ENCODE measurements at regions of chr4 and their contacts with region 1.

Region 1: GRCh38 chr4:25986807-25987206 is 72.8 kb downstream of the SMIM20 start:
- DNase-seq: no peak
- H3K4me3 ChIP-seq: no peak overlapping the region
- H3K27ac ChIP-seq: no peak overlapping the region
- H3K4me1 ChIP-seq: peaks cover 0 to 9% (median 4%) of the 10 kb centered on the region in 4 donors
- H3K27me3 ChIP-seq: no peaks in the 10 kb centered on the region
- CTCF ChIP-seq: no peak
- EP300 ChIP-seq: no peak
- POLR2A ChIP-seq: no peak

Region 2: DNA sequence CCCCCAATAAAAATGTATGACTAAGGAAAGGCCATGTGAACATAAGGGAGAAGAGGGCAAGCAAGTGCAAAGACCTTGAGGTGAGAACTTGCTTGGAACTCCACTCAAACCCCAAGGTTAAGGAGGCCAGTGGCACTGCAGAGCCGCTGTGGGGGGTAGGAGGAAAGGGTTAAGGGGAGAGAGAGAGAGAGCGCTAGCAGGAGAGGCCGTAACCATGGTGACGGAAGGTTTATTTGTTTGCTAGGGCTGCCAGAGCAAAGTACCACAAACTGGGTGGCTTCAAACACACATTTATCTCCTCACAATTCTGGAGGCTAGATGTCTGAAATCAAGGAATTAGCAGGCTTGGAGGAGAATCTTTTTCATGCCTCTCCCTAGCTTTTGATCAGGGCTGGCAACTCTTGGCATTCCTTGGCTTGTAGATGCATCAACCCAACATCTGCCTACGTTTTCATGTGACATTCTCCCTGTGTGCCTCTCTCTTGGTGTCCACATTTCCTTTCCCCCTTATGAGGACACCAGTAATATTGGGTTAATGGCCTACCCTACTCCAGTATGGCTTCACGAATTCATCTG is 37.5 kb before region 1 on chr4:
- intact Hi-C with region 1: no loop called
- DNase-seq: no peak
- H3K4me3 ChIP-seq: no peak overlapping the region
- H3K27ac ChIP-seq: no peak overlapping the region
- H3K4me1 ChIP-seq: no peaks in the 10 kb centered on the region
- H3K27me3 ChIP-seq: no peaks in the 10 kb centered on the region
- CTCF ChIP-seq: no peak
- EP300 ChIP-seq: no peak
- POLR2A ChIP-seq: no peak

Region 3: DNA sequence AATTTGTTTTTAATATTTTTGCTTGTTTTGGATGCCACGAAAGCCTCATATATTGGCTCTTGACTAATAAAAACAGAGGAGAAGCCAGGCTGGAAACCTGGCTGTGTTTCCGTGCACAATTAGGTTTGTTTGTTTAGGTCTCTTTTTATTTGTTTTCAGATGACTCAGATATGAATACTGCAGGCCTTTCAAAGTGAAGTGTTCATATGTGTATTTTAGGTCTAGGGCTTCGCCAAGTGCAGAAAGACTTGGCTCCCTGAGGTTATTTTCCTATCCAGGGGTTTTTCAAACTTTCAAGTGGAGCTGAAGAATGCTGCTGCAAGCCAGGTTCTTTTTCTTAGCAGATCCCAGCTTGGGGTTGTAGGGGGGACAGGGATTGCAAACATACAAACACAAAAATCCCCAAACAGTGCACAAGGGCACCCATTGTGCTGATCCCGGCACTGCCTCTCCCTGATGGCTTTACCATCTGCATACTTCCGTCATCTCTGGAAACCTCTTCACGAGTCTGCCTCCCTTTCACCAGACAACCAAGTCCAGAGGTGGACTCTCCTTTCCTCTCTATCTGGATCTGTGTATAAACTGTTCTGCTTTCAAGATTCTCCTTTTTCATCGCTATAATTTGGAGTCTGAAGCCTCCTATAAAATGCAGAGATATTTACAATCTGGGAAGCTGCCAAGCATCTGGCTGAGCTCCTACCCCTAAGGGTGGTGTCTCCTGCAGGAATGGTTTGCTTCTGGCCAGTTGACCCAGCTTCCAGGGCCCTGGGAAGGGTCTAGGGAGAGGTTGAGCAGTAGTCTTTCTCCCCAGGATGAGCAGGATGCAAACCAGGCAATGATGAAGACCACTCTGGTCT is 35.8 kb after region 1 on chr4:
- intact Hi-C with region 1: loop called (anchors 5 kb)
- DNase-seq: no peak
- H3K4me3 ChIP-seq: no peak overlapping the region
- H3K27ac ChIP-seq: peak overlapping the region; percentile 16 to 81 (median 62)
- H3K4me1 ChIP-seq: peaks cover 0 to 35% (median 33%) of the 10 kb centered on the region in 4 donors
- H3K27me3 ChIP-seq: no peaks in the 10 kb centered on the region
- CTCF ChIP-seq: no peak
- EP300 ChIP-seq: no peak
- POLR2A ChIP-seq: no peak

Region 4: DNA sequence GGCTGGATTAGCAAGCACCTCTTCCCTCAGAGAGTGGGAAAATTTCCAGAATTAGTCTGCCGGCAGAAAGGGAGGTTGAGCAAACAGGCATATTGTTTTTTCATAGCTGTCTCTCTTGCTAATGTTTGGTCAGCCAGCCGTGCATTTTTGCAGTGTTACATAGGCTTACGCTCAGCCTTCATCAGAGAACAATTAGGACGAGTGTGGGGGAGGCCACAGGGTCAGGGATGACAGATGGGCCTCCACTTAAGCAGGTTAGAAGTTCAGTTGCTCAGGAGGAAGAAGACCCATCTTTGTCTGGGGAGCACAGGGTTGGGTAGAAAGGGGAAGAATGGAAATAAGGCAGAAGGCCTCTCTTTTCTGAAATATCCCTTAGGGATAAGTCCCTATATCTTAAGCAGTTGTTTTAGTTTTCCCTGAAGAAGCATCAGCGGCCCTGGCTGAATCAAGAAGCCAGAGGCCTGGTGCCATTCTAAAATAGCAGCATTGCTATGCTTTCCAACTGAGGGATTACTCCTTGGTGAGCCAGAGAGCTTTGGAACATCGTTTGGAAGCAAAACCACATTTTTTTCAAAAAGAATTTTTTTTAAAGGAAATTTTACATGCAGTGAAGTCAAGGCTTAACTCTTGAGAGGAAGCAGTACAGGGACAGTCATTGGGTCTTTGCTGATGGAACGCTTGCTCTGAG is 46.0 kb after region 1 on chr4:
- intact Hi-C with region 1: no loop called
- DNase-seq: no peak
- H3K4me3 ChIP-seq: no peak overlapping the region
- H3K27ac ChIP-seq: peak overlapping the region; percentile 62 to 73 (median 68)
- H3K4me1 ChIP-seq: peaks cover 0 to 28% (median 20%) of the 10 kb centered on the region in 4 donors
- H3K27me3 ChIP-seq: no peaks in the 10 kb centered on the region
- CTCF ChIP-seq: no peak
- EP300 ChIP-seq: no peak
- POLR2A ChIP-seq: no peak